HCT116 (cell line): ENCODE measurements at regions of chr18 and their contacts with region 1.

Region 1: GRCh38 chr18:54607215-54607934 is 16.3 kb downstream of the DYNAP start:
- DNase-seq: no peak
- ATAC-seq: no peak
- H3K4me3 ChIP-seq: peak overlapping the region in 1 of 2 experiments; percentile 21; a peak in 1 of 4 replicates
- H3K27ac ChIP-seq: no peak overlapping the region
- H3K4me1 ChIP-seq: 0 out of 4 replicates have a peak, but pooled peaks cover 0 to 7% of the 10 kb centered on the region in 2 experiments
- H3K27me3 ChIP-seq: no peaks in the 10 kb centered on the region
- CTCF ChIP-seq: no peak
- POLR2A ChIP-seq: no peak
- RAD21 ChIP-seq: no peak

Region 2: GRCh38 chr18:54636217-54636616 is 28.8 kb after region 1 on chr18:
- CTCF ChIA-PET with region 1: no interaction called
- POLR2A ChIA-PET with region 1: no interaction called
- RAD21 ChIA-PET with region 1: no interaction called
- intact Hi-C with region 1: loop called (anchors 1 kb)
- DNase-seq: no peak
- ATAC-seq: no peak
- H3K4me3 ChIP-seq: no peak overlapping the region
- H3K27ac ChIP-seq: no peak overlapping the region
- H3K4me1 ChIP-seq: no peaks in the 10 kb centered on the region
- H3K27me3 ChIP-seq: no peaks in the 10 kb centered on the region
- CTCF ChIP-seq: no peak
- POLR2A ChIP-seq: no peak
- RAD21 ChIP-seq: no peak

Region 3: DNA sequence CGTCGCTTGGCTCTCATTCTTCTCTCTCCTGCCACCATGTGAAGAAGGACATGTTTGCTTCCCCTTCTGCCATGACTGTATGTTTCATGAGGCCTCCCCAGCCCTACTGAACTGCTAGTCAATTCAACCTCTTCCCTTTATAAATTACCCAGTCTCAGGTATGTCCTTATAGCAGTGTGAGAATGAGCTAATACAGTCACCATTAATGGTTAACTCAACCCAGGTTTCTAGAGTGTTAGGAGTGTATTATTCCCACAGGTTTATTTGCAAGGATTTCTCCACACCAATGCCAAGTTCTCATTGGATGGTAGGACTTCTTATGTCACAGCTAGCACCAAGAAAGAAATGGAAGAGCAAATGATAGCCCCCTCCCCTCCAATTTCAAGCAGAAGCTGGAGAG is 55.6 kb after region 1 on chr18:
- CTCF ChIA-PET with region 1: no interaction called
- POLR2A ChIA-PET with region 1: no interaction called
- RAD21 ChIA-PET with region 1: no interaction called
- intact Hi-C with region 1: no loop called
- DNase-seq: no peak
- ATAC-seq: no peak
- H3K4me3 ChIP-seq: no peak overlapping the region
- H3K27ac ChIP-seq: no peak overlapping the region
- H3K4me1 ChIP-seq: no peaks in the 10 kb centered on the region
- H3K27me3 ChIP-seq: no peaks in the 10 kb centered on the region
- CTCF ChIP-seq: no peak
- POLR2A ChIP-seq: no peak
- RAD21 ChIP-seq: no peak

Region 4: DNA sequence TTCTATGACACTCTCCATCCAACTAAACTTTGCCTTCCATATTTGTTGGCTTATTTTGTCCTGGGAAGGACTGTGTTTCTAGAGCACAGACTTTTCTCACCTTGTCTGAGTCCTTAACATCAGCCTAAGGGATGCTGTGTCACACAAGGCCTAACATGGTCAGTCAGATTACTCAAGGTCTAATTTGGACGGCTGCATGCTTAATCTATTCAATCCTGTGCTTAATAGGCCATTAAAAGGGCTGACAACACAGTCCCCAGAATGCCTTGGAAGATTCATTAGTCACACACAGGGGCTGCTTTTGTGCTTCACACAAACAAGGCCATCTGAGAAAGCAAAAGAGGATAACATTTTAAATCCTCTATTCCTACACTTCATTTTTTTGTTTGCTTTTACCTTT is 67.7 kb after region 1 on chr18:
- CTCF ChIA-PET with region 1: no interaction called
- POLR2A ChIA-PET with region 1: no interaction called
- RAD21 ChIA-PET with region 1: no interaction called
- intact Hi-C with region 1: no loop called
- DNase-seq: no peak
- ATAC-seq: no peak
- H3K4me3 ChIP-seq: no peak overlapping the region
- H3K27ac ChIP-seq: no peak overlapping the region
- H3K4me1 ChIP-seq: no peaks in the 10 kb centered on the region
- H3K27me3 ChIP-seq: no peaks in the 10 kb centered on the region
- CTCF ChIP-seq: no peak
- POLR2A ChIP-seq: no peak
- RAD21 ChIP-seq: no peak

Region 5: DNA sequence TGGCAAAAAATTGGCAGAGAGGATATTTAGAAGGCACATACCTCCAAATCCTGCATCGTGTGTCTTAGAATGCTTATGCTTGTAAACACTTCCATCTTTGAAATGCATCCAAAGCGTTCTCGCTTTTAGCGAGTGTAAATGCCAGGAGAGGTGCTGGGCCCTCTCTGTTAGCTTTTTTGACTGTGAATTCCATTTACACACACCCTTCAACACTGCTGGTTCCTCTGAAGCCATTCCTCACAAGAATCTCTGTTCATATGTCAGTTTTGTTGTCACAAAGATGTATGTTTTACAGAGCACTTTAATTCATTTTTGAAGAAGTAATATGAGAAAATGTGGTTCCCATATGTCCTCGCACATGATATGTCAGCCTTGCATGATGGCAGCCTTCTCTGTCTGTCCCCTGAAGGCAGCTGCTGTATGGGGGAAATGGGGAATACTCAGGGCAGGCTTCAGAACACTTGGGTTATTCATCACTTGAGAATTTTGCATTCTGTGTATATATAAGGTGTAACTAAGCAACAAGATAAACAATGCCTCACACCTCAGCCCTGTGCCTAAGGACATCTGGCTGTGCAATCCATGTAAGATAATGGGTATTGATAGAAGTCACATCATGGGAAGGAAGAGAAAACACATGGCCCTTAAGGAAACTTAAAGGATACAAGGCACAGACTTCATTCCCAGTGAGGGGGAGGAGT is 273.2 kb after region 1 on chr18:
- CTCF ChIA-PET with region 1: no interaction called
- POLR2A ChIA-PET with region 1: no interaction called
- RAD21 ChIA-PET with region 1: no interaction called
- intact Hi-C with region 1: no loop called
- DNase-seq: no peak
- ATAC-seq: no peak
- H3K4me3 ChIP-seq: no peak overlapping the region
- H3K27ac ChIP-seq: no peak overlapping the region
- H3K4me1 ChIP-seq: no peaks in the 10 kb centered on the region
- H3K27me3 ChIP-seq: no peaks in the 10 kb centered on the region
- CTCF ChIP-seq: no peak
- POLR2A ChIP-seq: no peak
- RAD21 ChIP-seq: no peak

Region 6: GRCh38 chr18:55166260-55166598 is 558.9 kb after region 1 on chr18:
- CTCF ChIA-PET with region 1: no interaction called
- POLR2A ChIA-PET with region 1: no interaction called
- RAD21 ChIA-PET with region 1: no interaction called
- intact Hi-C with region 1: no loop called
- DNase-seq: no peak
- ATAC-seq: no peak
- H3K4me3 ChIP-seq: no peak overlapping the region
- H3K27ac ChIP-seq: no peak overlapping the region
- H3K4me1 ChIP-seq: no peaks in the 10 kb centered on the region
- H3K27me3 ChIP-seq: peaks cover 11% of the 10 kb centered on the region; the same call in 1 of the 2 replicates
- CTCF ChIP-seq: no peak
- POLR2A ChIP-seq: no peak
- RAD21 ChIP-seq: no peak